Gastrocnemius medialis (tissue), 4 donors: ENCODE measurements at regions of chr7 and their contacts with region 1.

Region 1: GRCh38 chr7:143299840-143300239 is 11.7 kb downstream of the CASP2 start:
- DNase-seq: no peak
- ATAC-seq: peak in 1 of 2 donors; percentile 60
- H3K4me3 ChIP-seq: no peak overlapping the region
- H3K27ac ChIP-seq: peak overlapping the region in 1 of 4 donors; percentile 12
- H3K4me1 ChIP-seq: peaks cover 0 to 13% of the 10 kb centered on the region in 2 donors
- H3K27me3 ChIP-seq: no peaks in the 10 kb centered on the region
- CTCF ChIP-seq: peak in 4 of 5 experiments; percentile 14 to 53 (median 22)
- POLR2A ChIP-seq: no peak

Region 2: GRCh38 chr7:143250822-143251221 is 49.0 kb before region 1 on chr7:
- in situ Hi-C with region 1: loop called in 1 of 4 experiments (anchors 5 kb)
- intact Hi-C with region 1: no loop called
- DNase-seq: no peak
- ATAC-seq: no peak
- H3K4me3 ChIP-seq: no peak overlapping the region
- H3K27ac ChIP-seq: no peak overlapping the region
- H3K4me1 ChIP-seq: no peaks in the 10 kb centered on the region
- H3K27me3 ChIP-seq: no peaks in the 10 kb centered on the region
- CTCF ChIP-seq: no peak
- POLR2A ChIP-seq: no peak